ENCODE measurements at regions of chr4 and their contacts with region 1.

Region 1: DNA sequence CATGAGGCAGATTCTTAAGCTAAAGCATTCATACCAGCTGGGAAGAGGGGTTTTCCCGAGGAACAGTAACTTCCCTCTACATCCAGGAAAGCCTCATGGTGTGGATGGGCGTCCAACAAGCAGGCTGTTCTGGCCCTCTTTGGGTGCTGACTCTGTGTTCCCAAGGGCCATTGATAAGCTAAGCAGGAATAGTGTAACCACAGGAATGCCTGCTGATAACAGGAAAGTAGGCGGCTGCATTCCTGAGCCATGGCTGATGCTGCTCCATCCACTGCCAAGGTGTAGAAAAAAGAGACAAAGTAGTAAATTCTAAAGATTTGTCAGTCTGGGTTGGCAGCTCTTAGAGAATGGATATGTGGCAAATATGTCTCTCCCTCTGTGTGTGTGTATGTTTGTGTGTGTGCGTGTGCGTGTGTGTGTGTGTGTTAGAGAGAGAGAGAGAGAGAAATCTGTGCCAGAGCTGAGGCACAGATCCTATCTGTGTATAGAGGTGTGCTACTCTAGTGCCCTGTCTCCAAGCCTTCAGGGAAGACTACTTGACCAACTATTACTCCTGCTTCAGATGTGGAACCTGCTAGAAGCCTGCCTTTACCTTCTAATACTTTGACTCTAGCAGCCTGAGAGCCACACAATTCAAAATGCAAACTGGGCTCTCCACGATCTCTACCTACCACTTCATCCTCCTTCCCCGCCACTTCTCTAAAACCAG is 353.1 kb upstream of the NR3C2 start:
- H3K4me3 ChIP-seq: no peak overlapping the region
- H3K27ac ChIP-seq: no peak overlapping the region
- H3K4me1 ChIP-seq: no peaks in the 10 kb centered on the region
- CTCF ChIP-seq: no peak

Region 2: DNA sequence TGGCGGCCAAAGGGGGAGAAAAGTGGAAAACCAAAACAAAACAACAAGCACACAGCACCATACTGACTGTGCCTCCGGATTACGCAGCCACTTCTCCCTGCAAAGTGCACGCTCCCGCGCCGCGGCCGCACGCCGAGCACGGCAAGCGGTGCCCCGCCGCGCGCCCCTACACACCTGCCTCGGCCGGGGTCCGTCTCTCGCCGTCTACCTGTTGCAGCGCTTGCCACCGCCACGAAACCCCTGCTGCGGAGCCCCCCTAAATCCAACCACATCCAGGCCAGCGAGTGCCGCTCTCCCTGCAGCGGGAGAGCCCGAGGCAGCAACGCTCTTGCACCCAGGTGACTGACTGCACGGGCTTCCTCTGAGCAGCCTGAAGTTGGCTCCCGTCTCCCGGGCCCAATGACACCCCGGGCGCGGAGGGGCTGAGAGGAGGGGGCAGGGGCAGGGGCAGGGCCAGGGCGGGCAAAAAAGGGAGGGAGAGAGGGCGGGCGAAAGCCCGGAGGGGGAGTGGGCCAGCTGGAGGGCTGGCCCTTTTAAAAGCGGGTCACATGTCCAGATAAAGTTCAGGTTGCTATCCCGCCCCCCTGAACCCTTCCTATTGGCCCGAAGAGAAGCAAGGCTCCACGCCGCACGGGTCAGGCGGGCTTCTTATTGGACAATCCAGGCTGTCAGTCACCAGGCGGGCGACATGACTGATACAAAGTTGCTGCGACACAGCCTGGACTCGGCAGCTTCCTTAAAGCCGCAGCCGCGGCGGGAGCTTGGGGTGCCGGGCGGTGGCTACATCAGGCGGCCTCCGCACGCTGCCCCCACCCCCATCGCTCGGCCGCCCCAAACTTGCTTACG is 353.1 kb before region 1 on chr4 and contains the start of gene NR3C2:
- CTCF ChIA-PET with region 1: no interaction called
- POLR2A ChIA-PET with region 1: interaction called, 11 read pairs
- H3K4me3 ChIP-seq: peak within 1 kb of the TSS; percentile 68
- H3K27ac ChIP-seq: peak within 1 kb of the TSS; percentile 85; the same call in 1 of the 2 replicates
- H3K4me1 ChIP-seq: peaks cover 7% of the 10 kb centered on the region; the same call in 1 of the 2 replicates
- CTCF ChIP-seq: peak; percentile 70; the same call in 1 of the 2 replicates